Right cardiac atrium (tissue), 5 donors: ENCODE measurements at regions of chr17 and their contacts with region 1.

Region 1: GRCh38 chr17:38674749-38675615 is at the start of gene EPOP:
- DNase-seq: peak; percentile 92 to 95 (median 95)
- ATAC-seq: peak; percentile 92 to 94
- H3K4me3 ChIP-seq: peak within 1 kb of the TSS; percentile 82
- H3K27ac ChIP-seq: no peak within 1 kb of the TSS
- H3K4me1 ChIP-seq: peaks cover 2% of the 10 kb centered on the region
- H3K27me3 ChIP-seq: no peaks in the 10 kb centered on the region
- total RNA-seq, gene EPOP: 0.91 to 2.9 (median 1.7) TPM

Region 2: GRCh38 chr17:38509008-38509771 is 165.8 kb before region 1 on chr17:
- intact Hi-C with region 1: loop called in 1 of 4 experiments (anchors 5 kb)
- DNase-seq: peak; percentile 85 to 92 (median 92)
- ATAC-seq: peak; percentile 68 to 71
- H3K4me3 ChIP-seq: no peak overlapping the region
- H3K27ac ChIP-seq: no peak overlapping the region
- H3K4me1 ChIP-seq: peaks cover 7% of the 10 kb centered on the region
- H3K27me3 ChIP-seq: no peaks in the 10 kb centered on the region

Region 3: GRCh38 chr17:38729886-38730525 is 55.0 kb after region 1 on chr17 and contains the start of gene CISD3:
- intact Hi-C with region 1: loop called (anchors 2 to 10 kb)
- DNase-seq: peak; percentile 90 to 97 (median 96)
- ATAC-seq: peak; percentile 73 to 89
- H3K4me3 ChIP-seq: peak within 1 kb of the TSS; percentile 60
- H3K27ac ChIP-seq: peak within 1 kb of the TSS; percentile 59
- H3K4me1 ChIP-seq: peaks cover 2% of the 10 kb centered on the region
- H3K27me3 ChIP-seq: no peaks in the 10 kb centered on the region
- total RNA-seq, gene CISD3: 43.7 to 74.6 (median 67.9) TPM

Region 4: DNA sequence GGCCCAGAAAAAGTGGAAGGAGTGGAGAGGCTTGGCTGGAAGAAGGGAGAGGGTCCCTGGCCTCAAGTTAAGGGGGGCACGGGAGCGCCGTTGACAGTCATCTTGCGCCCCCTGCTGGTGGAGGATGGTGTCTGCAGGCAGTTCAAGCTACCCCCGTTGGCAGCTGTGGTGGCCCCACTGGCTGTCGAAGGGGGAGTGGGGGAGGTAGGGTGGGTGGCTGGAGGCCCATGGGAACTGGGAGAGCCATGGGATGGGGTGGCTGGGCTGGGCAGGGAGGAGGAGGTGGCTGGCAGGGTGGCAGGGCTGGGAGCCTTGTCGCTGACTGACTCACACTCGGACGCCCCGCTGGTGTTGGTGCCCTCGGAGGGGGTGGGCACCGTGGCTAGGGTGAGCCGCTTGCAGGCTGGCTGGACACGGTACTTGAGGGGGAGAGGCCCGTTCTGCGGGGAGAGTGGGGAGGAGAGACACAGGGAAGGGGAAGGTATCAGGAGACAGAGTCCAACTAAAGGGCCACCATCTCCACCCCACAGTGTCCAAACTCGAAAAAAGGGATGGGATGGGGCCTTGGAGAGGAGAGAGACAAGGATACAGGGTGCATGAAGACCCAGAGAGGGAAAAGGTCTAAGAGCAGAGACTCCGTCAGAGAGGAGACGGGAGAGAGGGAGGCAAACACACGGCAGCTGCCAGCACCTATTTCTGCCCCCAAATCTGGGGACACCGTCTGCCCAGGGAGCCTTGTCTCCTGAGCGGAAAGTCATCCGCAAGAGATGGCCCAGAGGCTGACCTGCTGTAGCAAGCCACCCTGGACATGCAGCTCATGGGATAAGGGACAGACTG is 60.4 kb after region 1 on chr17:
- intact Hi-C with region 1: loop called (anchors 2 to 10 kb)
- DNase-seq: peak; percentile 63 to 87 (median 83)
- ATAC-seq: peak; percentile 1 to 11
- H3K4me3 ChIP-seq: no peak overlapping the region
- H3K27ac ChIP-seq: no peak overlapping the region
- H3K4me1 ChIP-seq: peaks cover 2% of the 10 kb centered on the region
- H3K27me3 ChIP-seq: no peaks in the 10 kb centered on the region